ENCODE measurements at regions of chr22 and their contacts with region 1.

Region 1: DNA sequence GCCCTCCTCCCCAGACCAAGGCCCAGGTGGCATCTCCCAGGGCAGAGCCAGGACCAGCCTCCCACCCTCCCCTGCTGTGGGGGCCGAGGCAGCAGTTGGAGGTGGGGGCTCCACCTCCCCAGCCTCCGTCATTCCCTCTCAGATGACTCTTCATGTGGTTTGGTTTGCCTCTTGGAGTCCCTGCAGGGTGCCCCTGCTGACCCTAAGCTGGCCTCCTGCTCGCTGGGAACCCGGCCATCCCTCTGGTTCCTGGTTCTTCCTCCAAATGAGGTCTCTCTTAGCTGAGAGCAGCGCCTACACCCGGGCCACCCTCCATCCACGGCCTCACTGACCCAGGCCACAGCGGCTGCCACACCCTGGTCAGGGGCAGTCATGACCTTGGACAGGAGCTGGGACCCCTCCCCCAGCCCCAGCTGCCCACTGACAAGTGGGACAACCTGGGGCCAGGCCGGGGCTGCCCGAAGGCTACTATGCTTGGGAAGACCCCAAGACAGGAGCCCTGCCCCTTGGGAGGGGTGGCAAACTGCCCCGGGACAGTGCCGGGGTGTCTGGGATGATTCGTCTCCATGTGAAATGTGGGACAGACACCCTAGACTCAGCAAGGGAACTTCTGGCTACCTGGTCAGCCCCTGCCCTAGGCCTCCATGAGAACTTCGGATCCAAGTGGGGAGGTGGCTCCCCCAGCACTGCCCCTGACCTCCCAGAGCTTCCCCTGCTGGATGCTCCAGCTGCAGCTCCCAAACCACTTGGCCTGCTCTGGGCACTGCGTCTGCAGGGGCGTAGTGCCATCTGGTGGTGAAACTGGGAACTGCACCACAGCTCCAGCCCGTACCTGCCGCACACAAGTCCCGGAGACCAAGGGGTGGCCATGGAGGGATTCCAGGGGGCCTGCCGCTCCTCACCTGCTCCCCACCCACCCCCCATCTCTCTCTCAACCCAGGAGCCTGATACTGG is 194.5 kb downstream of the IGLL1 start:
- DNase-seq: peak; percentile 93
- H3K4me3 ChIP-seq: no peak overlapping the region; a peak in 1 of 4 replicates
- H3K27ac ChIP-seq: no peak overlapping the region
- H3K4me1 ChIP-seq: peaks cover 0 to 10% of the 10 kb centered on the region in 2 experiments; a peak in 1 of 4 replicates
- H3K27me3 ChIP-seq: no peaks in the 10 kb centered on the region
- CTCF ChIP-seq: peak; percentile 89
- EP300 ChIP-seq: no peak
- RAD21 ChIP-seq: peak; percentile 95

Region 2: GRCh38 chr22:23305922-23306374 is 79.6 kb before region 1 on chr22:
- CTCF ChIA-PET with region 1: interaction called, 12 read pairs
- POLR2A ChIA-PET with region 1: no interaction called
- DNase-seq: peak; percentile 75
- H3K4me3 ChIP-seq: no peak overlapping the region
- H3K27ac ChIP-seq: peak overlapping the region; percentile 42 to 62
- H3K4me1 ChIP-seq: peaks cover 12 to 18% of the 10 kb centered on the region in 2 experiments; a peak in 2 of 4 replicates
- H3K27me3 ChIP-seq: no peaks in the 10 kb centered on the region
- CTCF ChIP-seq: no peak
- EP300 ChIP-seq: no peak
- RAD21 ChIP-seq: no peak

Region 3: DNA sequence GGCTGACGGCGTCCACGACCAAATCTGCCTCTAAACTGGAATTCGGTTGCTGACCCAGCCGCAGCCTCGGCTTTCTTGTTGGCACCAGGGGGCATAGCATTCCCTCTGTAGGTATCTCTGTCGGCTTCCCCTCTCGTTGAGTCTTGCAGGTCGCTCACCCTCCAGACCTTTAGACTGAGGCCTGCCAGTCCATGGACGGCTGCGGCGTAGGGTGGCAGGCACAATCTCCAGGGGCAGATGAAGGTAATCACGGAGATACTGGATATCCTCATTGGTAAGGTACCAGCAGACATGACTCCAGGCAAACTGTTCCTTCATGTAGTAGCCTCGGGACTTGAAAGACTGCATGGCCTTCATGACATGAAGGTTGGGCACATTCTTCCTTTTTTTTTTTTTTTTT is 63.0 kb before region 1 on chr22:
- CTCF ChIA-PET with region 1: interaction called, 22 read pairs
- POLR2A ChIA-PET with region 1: no interaction called
- DNase-seq: no peak
- H3K4me3 ChIP-seq: no peak overlapping the region
- H3K27ac ChIP-seq: no peak overlapping the region
- H3K4me1 ChIP-seq: no peaks in the 10 kb centered on the region
- H3K27me3 ChIP-seq: no peaks in the 10 kb centered on the region
- CTCF ChIP-seq: no peak; the same call in 1 of the 2 replicates
- EP300 ChIP-seq: no peak
- RAD21 ChIP-seq: peak; percentile 25; the same call in 1 of the 2 replicates

Region 4: GRCh38 chr22:23395530-23396361 is 10.2 kb after region 1 on chr22:
- CTCF ChIA-PET with region 1: interaction called, 31 read pairs
- POLR2A ChIA-PET with region 1: no interaction called
- DNase-seq: no peak
- H3K4me3 ChIP-seq: no peak overlapping the region
- H3K27ac ChIP-seq: no peak overlapping the region
- H3K4me1 ChIP-seq: peaks cover 0 to 22% of the 10 kb centered on the region in 2 experiments; a peak in 1 of 4 replicates
- H3K27me3 ChIP-seq: no peaks in the 10 kb centered on the region
- CTCF ChIP-seq: no peak
- EP300 ChIP-seq: no peak
- RAD21 ChIP-seq: no peak

Region 5: DNA sequence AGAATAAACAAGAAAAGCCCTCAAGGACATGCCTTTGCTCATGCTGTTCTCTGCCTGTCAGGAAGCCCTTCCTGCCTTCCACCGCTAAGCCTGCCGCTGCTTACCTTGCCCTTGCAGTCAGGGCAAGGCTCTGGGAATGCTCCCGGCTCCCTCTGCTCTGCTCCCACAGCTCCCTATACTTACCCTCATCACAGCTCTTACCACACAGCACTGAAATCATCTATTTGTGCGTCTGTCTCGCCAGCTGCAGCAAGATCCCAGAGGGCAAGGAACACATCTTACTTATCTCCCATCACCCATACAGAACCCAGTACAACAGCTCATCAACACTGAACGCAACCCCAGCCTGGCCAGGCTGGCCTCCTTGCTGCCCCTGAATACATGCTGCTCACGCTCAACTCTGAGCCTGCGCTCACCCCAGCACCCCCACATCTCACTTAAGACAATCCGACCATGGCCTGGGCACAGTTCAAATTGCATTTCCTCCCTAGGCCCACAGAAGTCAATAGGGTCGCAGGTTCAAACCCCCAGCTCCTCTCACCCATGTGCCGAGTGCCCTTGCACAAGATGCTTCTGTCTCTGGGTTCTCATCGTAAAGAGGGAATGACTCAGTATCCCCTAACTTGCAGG is 32.7 kb after region 1 on chr22:
- CTCF ChIA-PET with region 1: interaction called, 10 read pairs
- POLR2A ChIA-PET with region 1: no interaction called
- DNase-seq: peak; percentile 64
- H3K4me3 ChIP-seq: no peak overlapping the region
- H3K27ac ChIP-seq: peak overlapping the region in 1 of 2 experiments; percentile 51; a peak in 2 of 4 replicates
- H3K4me1 ChIP-seq: peaks cover 0 to 10% of the 10 kb centered on the region in 2 experiments; a peak in 1 of 4 replicates
- H3K27me3 ChIP-seq: no peaks in the 10 kb centered on the region
- CTCF ChIP-seq: no peak
- EP300 ChIP-seq: no peak; a peak in 1 of 4 replicates
- RAD21 ChIP-seq: no peak; the same call in 1 of the 2 replicates

Region 6: GRCh38 chr22:23437779-23438178 is 52.2 kb after region 1 on chr22:
- CTCF ChIA-PET with region 1: no interaction called
- POLR2A ChIA-PET with region 1: no interaction called
- DNase-seq: no peak
- H3K4me3 ChIP-seq: no peak overlapping the region
- H3K27ac ChIP-seq: peak overlapping the region in 1 of 2 experiments; percentile 95; a peak in 2 of 4 replicates
- H3K4me1 ChIP-seq: peaks cover 0 to 27% of the 10 kb centered on the region in 2 experiments; a peak in 1 of 4 replicates
- H3K27me3 ChIP-seq: no peaks in the 10 kb centered on the region
- CTCF ChIP-seq: no peak
- EP300 ChIP-seq: no peak
- RAD21 ChIP-seq: no peak

Region 7: GRCh38 chr22:23591201-23591791 is 205.7 kb after region 1 on chr22:
- CTCF ChIA-PET with region 1: interaction called, 24 read pairs
- POLR2A ChIA-PET with region 1: no interaction called
- DNase-seq: peak; percentile 84
- H3K4me3 ChIP-seq: peak overlapping the region in 1 of 2 experiments; percentile 29; a peak in 1 of 4 replicates
- H3K27ac ChIP-seq: no peak overlapping the region
- H3K4me1 ChIP-seq: no peaks in the 10 kb centered on the region
- H3K27me3 ChIP-seq: no peaks in the 10 kb centered on the region
- CTCF ChIP-seq: peak; percentile 90
- EP300 ChIP-seq: no peak
- RAD21 ChIP-seq: peak; percentile 94